ENCODE measurements at regions of chr10 and their contacts with region 1.

Region 1: GRCh38 chr10:130061767-130062166 is 48.9 kb downstream of the C10orf143 start:
- DNase-seq: no peak
- ATAC-seq: no peak
- H3K4me3 Mint-ChIP-seq: no peak overlapping the region
- H3K27ac Mint-ChIP-seq: no peak overlapping the region
- H3K4me1 Mint-ChIP-seq: no peaks in the 10 kb centered on the region
- H3K27me3 Mint-ChIP-seq: no peaks in the 10 kb centered on the region

Region 2: GRCh38 chr10:129982825-129983224 is 78.9 kb before region 1 on chr10:
- CTCF ChIA-PET with region 1: no interaction called
- POLR2A ChIA-PET with region 1: interaction called, 16 read pairs
- intact Hi-C with region 1: no loop called
- DNase-seq: no peak
- ATAC-seq: no peak
- H3K4me3 Mint-ChIP-seq: no peak overlapping the region
- H3K27ac Mint-ChIP-seq: no peak overlapping the region
- H3K4me1 Mint-ChIP-seq: no peaks in the 10 kb centered on the region
- H3K27me3 Mint-ChIP-seq: peaks cover 41% of the 10 kb centered on the region

Region 3: GRCh38 chr10:130045091-130045652 is 16.6 kb before region 1 on chr10:
- CTCF ChIA-PET with region 1: no interaction called
- POLR2A ChIA-PET with region 1: no interaction called
- intact Hi-C with region 1: no loop called
- DNase-seq: peak; percentile 20
- ATAC-seq: no peak
- H3K4me3 Mint-ChIP-seq: no peak overlapping the region
- H3K27ac Mint-ChIP-seq: no peak overlapping the region
- H3K4me1 Mint-ChIP-seq: no peaks in the 10 kb centered on the region
- H3K27me3 Mint-ChIP-seq: no peaks in the 10 kb centered on the region